Vagina (tissue), 2 donors: ENCODE measurements at regions of chr3 and their contacts with region 1.

Region 1: GRCh38 chr3:10998542-10998941 is 6.0 kb downstream of the SLC6A1 start:
- DNase-seq: no peak
- H3K4me3 ChIP-seq: no peak overlapping the region
- H3K27ac ChIP-seq: no peak overlapping the region
- H3K4me1 ChIP-seq: peaks cover 4% of the 10 kb centered on the region
- H3K27me3 ChIP-seq: no peaks in the 10 kb centered on the region
- CTCF ChIP-seq: no peak
- POLR2A ChIP-seq: no peak

Region 2: GRCh38 chr3:9142362-9142761 is 1856.2 kb before region 1 on chr3:
- intact Hi-C with region 1: loop called (anchors 5 kb)
- DNase-seq: no peak
- H3K4me3 ChIP-seq: no peak overlapping the region
- H3K27ac ChIP-seq: no peak overlapping the region
- H3K4me1 ChIP-seq: peaks cover 17% of the 10 kb centered on the region
- H3K27me3 ChIP-seq: no peaks in the 10 kb centered on the region
- CTCF ChIP-seq: no peak
- POLR2A ChIP-seq: no peak

Region 3: DNA sequence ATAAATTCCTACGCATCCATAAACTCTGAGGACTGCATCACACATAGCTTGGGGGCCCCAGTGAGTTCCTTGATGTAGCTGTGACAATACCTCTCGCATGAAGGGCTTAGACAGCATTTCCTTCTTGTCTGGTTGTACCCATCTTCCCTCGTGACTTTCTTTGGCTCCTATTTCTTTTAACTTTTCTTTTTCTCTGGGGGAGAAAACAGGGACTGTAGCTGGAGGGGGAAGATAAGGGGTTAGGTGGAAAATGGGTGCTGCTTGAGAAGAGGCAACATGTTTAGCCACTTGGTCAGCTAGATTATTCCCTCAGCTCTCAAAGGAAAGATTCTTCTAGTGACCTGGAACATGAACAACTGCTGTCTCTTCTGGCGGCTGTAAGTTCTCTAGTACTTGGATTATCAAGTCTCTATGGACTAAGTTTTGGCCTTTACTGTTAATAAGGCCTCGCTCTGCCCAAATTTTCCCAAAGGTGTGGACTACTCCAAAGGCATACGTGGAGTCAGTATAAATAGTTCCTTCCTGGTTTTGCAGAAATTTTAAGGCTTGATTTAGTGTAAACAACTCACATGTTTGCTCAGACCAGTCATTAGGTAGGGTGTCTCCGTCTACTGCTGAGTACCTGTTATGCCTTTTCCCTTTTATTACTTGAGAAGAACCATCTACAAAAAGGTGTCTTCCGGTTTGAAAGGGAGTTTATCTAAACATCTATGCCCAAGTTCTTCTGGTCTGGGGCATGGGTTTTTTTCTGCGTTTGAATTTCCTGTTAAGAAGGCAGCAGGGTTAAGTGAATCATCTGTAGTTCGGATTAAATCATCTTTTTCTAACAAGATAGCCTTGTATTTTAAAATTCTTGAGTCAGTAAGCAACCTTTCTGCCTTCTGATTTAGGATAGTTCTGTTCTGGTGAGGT is 252.6 kb after region 1 on chr3:
- intact Hi-C with region 1: no loop called
- DNase-seq: no peak
- H3K4me3 ChIP-seq: no peak overlapping the region
- H3K27ac ChIP-seq: no peak overlapping the region
- H3K4me1 ChIP-seq: no peaks in the 10 kb centered on the region
- H3K27me3 ChIP-seq: no peaks in the 10 kb centered on the region
- CTCF ChIP-seq: no peak
- POLR2A ChIP-seq: no peak